Activated CD4-positive, alpha-beta memory T cell treated with anti-CD3 and anti-CD28 coated beads for 36 hours (primary cell): ENCODE measurements at regions of chr9 and their contacts with region 1.

Region 1: DNA sequence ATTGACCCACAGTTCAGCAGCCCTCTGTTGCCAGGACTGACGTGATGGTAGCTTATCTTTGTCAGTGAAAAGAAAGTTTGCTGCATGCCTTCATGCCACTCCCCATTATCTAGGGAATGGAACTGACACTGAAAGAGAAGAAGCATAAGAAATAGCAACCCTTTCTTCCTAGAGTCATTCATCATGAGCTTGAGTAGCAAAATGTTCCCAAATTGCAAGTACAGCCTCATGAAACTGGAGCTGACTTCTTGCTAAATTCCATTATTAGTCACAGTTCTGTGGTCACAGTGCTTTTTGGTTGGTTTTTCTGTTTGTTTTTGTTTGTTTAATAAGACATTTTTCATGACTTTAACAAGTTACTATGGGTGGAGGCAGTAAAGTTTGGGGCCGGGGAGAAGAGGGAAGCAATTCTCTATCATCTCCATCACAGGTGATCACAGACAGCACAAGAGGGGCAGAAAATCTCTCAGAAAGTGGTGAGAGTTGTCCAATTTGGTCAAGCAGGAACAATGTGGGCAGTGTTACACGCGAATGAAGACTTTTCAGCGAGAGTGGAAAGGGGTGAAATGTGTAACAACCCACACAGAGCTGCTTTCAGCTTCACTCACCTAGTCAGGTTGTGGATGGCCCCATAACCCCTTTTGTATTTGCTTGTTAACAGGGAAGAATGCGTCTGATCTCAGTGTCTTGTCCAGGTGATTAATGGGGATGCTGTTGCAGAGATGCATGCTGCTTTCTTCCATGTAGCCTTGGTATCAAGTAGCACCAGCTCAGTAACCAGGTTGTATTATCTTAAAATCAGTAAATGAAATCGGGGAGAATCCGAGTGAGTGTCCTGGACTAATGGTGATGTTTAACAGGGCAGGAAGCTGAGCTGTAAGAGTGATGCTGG is 440.4 kb downstream of the DMRT2 start:
- DNase-seq: peak; percentile 33
- H3K4me3 Mint-ChIP-seq: no peak overlapping the region
- H3K27ac Mint-ChIP-seq: peak overlapping the region; percentile 76
- H3K4me1 Mint-ChIP-seq: peaks cover 8% of the 10 kb centered on the region
- H3K27me3 Mint-ChIP-seq: peaks cover 9% of the 10 kb centered on the region

Region 2: DNA sequence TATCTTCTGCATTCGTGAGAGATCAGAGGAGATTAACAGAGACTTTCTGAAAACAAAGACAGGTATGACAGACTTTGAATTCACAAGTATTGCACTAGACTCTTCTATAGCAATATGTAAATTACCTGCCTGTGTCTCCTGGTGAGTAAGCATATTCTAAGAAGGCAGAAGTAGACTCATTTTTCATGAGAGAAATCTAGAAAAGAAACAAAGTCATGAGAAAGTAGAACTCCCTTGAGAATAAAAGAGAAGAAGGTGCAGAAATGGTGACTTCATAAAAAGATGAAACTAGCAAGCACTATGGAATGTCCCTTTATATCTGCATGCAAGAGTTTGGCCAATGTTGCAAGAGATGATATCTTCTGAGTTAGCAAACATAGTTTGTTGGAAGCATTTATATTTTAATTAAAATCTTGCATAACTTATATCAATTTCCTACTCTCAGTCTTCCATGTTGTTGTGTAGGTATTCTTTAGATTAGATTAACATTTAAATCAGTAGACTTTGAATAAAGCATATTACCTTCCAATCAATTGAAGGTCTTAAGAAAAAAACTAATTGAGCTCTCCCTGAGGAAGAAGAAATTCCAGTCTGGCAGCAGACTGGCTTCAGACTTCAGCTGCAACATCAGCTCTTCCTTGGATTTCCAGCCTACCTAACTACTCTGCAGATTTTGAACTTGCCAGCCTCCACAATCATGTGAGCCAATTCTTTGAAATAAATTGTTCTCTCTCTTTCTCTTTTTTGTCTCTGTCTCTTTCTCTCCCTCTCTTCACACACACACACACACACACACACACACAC is 20.4 kb before region 1 on chr9:
- CTCF ChIA-PET with region 1: no interaction called
- POLR2A ChIA-PET with region 1: no interaction called
- intact Hi-C with region 1: loop called (anchors 1 kb)
- DNase-seq: no peak
- H3K4me3 Mint-ChIP-seq: no peak overlapping the region
- H3K27ac Mint-ChIP-seq: no peak overlapping the region
- H3K4me1 Mint-ChIP-seq: peaks cover 9% of the 10 kb centered on the region
- H3K27me3 Mint-ChIP-seq: peaks cover 2% of the 10 kb centered on the region

Region 3: DNA sequence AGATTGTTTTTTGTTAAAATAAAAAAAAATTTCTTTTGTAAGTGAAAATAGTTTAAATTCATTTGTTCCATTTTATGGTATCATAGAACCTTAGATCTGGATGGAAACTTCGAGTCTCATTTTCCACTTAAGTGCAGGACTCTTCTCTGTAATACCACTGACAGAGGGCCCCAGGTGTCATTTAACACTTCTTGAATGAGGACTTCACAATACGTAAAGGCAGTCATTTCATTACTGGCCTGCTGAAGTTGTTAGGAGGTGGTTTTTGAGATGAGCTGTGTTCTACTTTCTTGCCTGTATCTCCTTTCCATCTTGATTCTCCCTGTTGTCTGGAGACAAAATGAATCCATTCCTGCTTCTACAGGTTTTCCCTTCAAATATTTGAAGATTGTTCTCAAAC is 14.9 kb after region 1 on chr9:
- CTCF ChIA-PET with region 1: no interaction called
- POLR2A ChIA-PET with region 1: no interaction called
- intact Hi-C with region 1: loop called (anchors 1 kb)
- DNase-seq: peak; percentile 16
- H3K4me3 Mint-ChIP-seq: no peak overlapping the region
- H3K27ac Mint-ChIP-seq: no peak overlapping the region
- H3K4me1 Mint-ChIP-seq: peaks cover 7% of the 10 kb centered on the region
- H3K27me3 Mint-ChIP-seq: peaks cover 6% of the 10 kb centered on the region

Region 4: DNA sequence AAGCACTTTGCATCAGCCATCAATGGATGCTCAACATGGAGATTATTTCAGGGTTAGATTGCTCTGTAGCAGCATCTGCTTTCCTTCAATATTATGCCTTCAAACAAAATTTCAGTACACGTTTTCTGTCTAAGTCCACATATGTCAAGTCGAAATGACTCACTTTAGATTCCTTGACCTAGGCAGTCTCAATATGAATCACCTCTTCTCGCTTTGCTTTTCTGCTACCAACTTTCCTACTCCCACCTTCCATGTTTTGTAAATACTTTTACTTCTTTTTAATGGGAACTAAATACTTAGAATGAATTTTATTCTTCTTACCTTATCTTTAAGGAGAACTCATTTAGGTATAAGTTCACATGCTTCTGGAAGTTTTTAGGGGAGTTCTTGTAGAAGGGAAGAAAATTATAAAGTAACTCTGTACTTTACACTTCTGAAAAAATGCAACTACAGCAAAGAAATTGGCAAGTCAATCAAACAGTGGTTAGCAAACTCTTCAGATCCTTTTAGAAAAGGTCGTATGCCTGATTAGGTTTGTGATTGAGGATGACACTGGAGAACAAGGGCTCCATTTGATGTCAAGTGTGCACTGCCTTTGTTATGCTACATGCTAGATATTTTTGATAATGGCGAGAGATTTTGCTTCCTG is 46.1 kb after region 1 on chr9:
- CTCF ChIA-PET with region 1: no interaction called
- POLR2A ChIA-PET with region 1: no interaction called
- intact Hi-C with region 1: loop called (anchors 5 kb)
- DNase-seq: no peak
- H3K4me3 Mint-ChIP-seq: no peak overlapping the region
- H3K27ac Mint-ChIP-seq: no peak overlapping the region
- H3K4me1 Mint-ChIP-seq: peaks cover 11% of the 10 kb centered on the region
- H3K27me3 Mint-ChIP-seq: peaks cover 6% of the 10 kb centered on the region